Body of pancreas (tissue), 4 donors: ENCODE measurements at regions of chr5 and their contacts with region 1.

Region 1: GRCh38 chr5:81851481-81852178 is 100.7 kb upstream of the SSBP2 start:
- DNase-seq: peak; percentile 96 to 99 (median 97)
- ATAC-seq: peak; percentile 97
- H3K4me3 ChIP-seq: peak overlapping the region in 1 of 2 donors; percentile 12
- H3K27ac ChIP-seq: peak overlapping the region; percentile 82 to 96 (median 94)
- H3K4me1 ChIP-seq: peaks cover 58% of the 10 kb centered on the region
- H3K27me3 ChIP-seq: no peaks in the 10 kb centered on the region
- CTCF ChIP-seq: peak in 3 of 7 experiments; percentile 9 to 30 (median 22)
- POLR2A ChIP-seq: peak in 2 of 3 donors; percentile 71 to 79

Region 2: DNA sequence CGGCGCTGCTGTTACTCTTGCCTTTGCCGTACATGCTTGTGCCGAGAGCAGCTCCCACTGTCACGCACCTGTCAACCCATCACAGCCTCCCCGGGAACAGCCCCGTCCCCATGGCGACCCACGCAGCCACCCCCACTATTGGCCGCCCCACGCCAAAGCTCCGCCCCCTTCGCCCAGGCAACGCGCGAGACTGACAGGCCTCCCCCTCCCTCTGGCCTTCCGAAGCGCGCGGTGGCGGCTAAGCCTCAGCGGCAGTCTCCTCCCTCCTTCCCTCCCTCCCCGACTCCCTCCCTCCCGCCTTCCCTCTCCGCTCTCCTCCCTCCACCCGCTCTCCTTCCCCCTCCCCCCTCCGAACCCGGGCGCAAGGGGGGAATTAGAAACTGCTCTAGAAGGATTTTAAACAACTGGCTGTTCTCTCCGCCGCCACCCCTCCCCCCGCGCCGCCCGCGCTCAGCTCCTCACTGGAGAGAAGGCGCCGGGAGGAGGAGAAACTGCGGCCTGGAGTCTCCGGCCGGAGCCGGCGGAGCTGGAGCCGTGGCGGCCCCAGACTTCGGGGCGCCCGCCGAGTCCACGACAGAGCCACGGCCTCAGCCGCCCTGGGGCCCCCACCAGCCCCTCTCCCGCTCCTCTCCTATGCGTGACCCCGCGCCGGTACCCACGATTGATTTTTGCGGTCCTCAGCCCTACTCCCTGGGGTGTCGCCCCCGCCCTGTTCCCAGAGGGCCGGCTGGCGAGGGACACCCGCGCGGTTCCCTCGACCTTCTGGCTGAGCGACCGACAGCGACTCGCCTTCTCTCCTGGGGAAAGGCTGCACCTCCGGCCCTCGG is 100.4 kb before region 1 on chr5 and contains the start of gene SSBP2:
- intact Hi-C with region 1: loop called (anchors 5 kb)
- DNase-seq: peak; percentile 99 to 100 (median 99)
- ATAC-seq: peak; percentile 91
- H3K4me3 ChIP-seq: peak within 1 kb of the TSS; percentile 70 to 89
- H3K27ac ChIP-seq: peak within 1 kb of the TSS; percentile 96 to 99 (median 98)
- H3K4me1 ChIP-seq: peaks cover 42% of the 10 kb centered on the region
- H3K27me3 ChIP-seq: no peaks in the 10 kb centered on the region
- CTCF ChIP-seq: peak in 3 of 7 experiments; percentile 16 to 26 (median 18)
- POLR2A ChIP-seq: peak; percentile 75 to 86 (median 83)
- total RNA-seq, gene SSBP2: 18.1 to 31.4 TPM

Region 3: GRCh38 chr5:81794226-81794625 is 57.4 kb before region 1 on chr5:
- intact Hi-C with region 1: loop called (anchors 10 kb)
- DNase-seq: no peak
- ATAC-seq: no peak
- H3K4me3 ChIP-seq: no peak overlapping the region
- H3K27ac ChIP-seq: no peak overlapping the region
- H3K4me1 ChIP-seq: no peaks in the 10 kb centered on the region
- H3K27me3 ChIP-seq: no peaks in the 10 kb centered on the region
- CTCF ChIP-seq: no peak
- POLR2A ChIP-seq: no peak

Region 4: GRCh38 chr5:81965524-81965923 is 113.9 kb after region 1 on chr5:
- intact Hi-C with region 1: no loop called
- DNase-seq: no peak
- ATAC-seq: no peak
- H3K4me3 ChIP-seq: no peak overlapping the region
- H3K27ac ChIP-seq: no peak overlapping the region
- H3K4me1 ChIP-seq: no peaks in the 10 kb centered on the region
- H3K27me3 ChIP-seq: no peaks in the 10 kb centered on the region
- CTCF ChIP-seq: no peak
- POLR2A ChIP-seq: no peak